ENCODE measurements at regions of chr12 and their contacts with region 1.

Region 1: GRCh38 chr12:98653866-98654493 is 8.9 kb downstream of the APAF1 start:
- DNase-seq: no peak
- H3K4me3 Mint-ChIP-seq: no peak overlapping the region
- H3K27ac Mint-ChIP-seq: no peak overlapping the region
- H3K4me1 Mint-ChIP-seq: peaks cover 15% of the 10 kb centered on the region
- H3K27me3 Mint-ChIP-seq: no peaks in the 10 kb centered on the region

Region 2: GRCh38 chr12:98490501-98491453 is 163.2 kb before region 1 on chr12:
- CTCF ChIA-PET with region 1: interaction called, 3 read pairs
- intact Hi-C with region 1: loop called (anchors 1 kb)
- DNase-seq: peak; percentile 91
- H3K4me3 Mint-ChIP-seq: peak overlapping the region; percentile 59
- H3K27ac Mint-ChIP-seq: peak overlapping the region; percentile 87
- H3K4me1 Mint-ChIP-seq: peaks cover 4% of the 10 kb centered on the region
- H3K27me3 Mint-ChIP-seq: no peaks in the 10 kb centered on the region

Region 3: GRCh38 chr12:98572010-98572409 is 82.0 kb before region 1 on chr12:
- CTCF ChIA-PET with region 1: interaction called, 23 read pairs
- intact Hi-C with region 1: loop called (anchors 1 kb)
- DNase-seq: no peak
- H3K4me3 Mint-ChIP-seq: no peak overlapping the region
- H3K27ac Mint-ChIP-seq: no peak overlapping the region
- H3K4me1 Mint-ChIP-seq: no peaks in the 10 kb centered on the region
- H3K27me3 Mint-ChIP-seq: peaks cover 2% of the 10 kb centered on the region

Region 4: DNA sequence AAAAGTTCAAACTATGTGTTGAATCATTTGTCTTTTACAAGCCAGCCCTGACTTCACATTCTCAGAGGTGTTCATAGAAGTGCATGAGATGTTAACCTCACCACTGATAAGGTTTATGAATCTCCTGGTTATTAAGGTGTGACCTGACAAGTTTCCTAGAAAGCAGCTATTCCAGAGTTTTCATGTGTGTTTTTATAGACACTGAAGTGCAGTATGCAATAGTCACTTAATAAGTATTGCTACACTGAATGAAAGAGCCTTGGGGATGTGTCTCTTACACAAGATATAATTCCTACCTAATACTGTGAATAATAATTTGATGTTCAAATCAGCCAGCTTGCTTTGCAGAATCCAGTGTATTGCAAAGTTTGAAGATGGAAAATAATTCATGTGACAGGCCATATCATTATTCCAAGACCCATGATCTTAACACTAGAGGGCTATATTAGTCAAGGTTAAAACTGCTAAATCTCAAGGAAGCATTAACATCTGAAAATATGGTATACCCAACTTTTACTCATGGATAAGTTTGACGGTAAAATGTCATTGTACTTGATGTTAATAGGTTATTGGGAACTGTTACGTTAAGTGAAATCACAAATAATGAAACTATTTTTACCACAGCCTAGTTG is 47.5 kb before region 1 on chr12:
- CTCF ChIA-PET with region 1: no interaction called
- intact Hi-C with region 1: loop called (anchors 2 kb)
- DNase-seq: no peak
- H3K4me3 Mint-ChIP-seq: no peak overlapping the region
- H3K27ac Mint-ChIP-seq: no peak overlapping the region
- H3K4me1 Mint-ChIP-seq: peaks cover 6% of the 10 kb centered on the region
- H3K27me3 Mint-ChIP-seq: no peaks in the 10 kb centered on the region

Region 5: DNA sequence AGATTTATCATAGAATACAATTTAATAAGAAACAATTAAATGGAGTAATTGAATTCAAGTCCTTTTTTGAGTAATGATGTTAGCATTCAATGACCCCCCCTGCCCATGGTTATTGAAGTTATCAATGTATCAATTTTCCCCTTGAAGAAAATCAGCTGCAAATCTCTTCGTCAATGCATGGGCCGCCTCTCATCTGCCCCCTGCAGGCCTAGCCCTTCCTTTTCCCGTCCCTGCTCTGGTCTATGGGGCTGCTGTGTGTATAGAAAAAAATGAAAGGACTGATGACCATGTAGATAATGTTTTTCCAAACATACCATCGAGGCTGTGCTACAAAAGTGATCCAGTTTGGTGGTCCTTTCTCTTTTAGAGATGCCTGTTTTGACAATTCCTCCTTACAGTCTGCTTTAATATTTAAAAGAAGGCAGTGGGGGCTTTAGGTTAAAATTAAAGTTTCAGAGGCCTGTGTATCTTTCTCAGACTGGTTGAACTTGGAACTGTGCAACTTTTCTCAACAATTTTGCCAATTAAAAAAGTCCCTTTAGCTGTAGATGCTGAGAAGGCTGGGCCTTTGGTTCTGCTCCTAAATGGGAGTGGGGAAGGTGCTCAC is 89.5 kb after region 1 on chr12:
- CTCF ChIA-PET with region 1: no interaction called
- intact Hi-C with region 1: loop called (anchors 1 kb)
- DNase-seq: peak; percentile 60
- H3K4me3 Mint-ChIP-seq: no peak overlapping the region
- H3K27ac Mint-ChIP-seq: no peak overlapping the region
- H3K4me1 Mint-ChIP-seq: peaks cover 21% of the 10 kb centered on the region
- H3K27me3 Mint-ChIP-seq: peaks cover 22% of the 10 kb centered on the region